ENCODE measurements at regions of chr16 and their contacts with region 1.

Region 1: GRCh38 chr16:4200000-4200780 is 41.7 kb downstream of the SRL start:
- DNase-seq: peak; percentile 69
- H3K4me3 ChIP-seq: no peak overlapping the region
- H3K27ac ChIP-seq: no peak overlapping the region
- H3K4me1 ChIP-seq: no peaks in the 10 kb centered on the region
- H3K27me3 ChIP-seq: no peaks in the 10 kb centered on the region
- CTCF ChIP-seq: peak; percentile 38 to 87 (median 70)
- POLR2A ChIP-seq: no peak

Region 2: GRCh38 chr16:4226251-4227038 is 26.3 kb after region 1 on chr16:
- intact Hi-C with region 1: no loop called
- DNase-seq: no peak
- H3K4me3 ChIP-seq: no peak overlapping the region
- H3K27ac ChIP-seq: no peak overlapping the region
- H3K4me1 ChIP-seq: no peaks in the 10 kb centered on the region
- H3K27me3 ChIP-seq: no peaks in the 10 kb centered on the region
- CTCF ChIP-seq: no peak
- POLR2A ChIP-seq: no peak

Region 3: DNA sequence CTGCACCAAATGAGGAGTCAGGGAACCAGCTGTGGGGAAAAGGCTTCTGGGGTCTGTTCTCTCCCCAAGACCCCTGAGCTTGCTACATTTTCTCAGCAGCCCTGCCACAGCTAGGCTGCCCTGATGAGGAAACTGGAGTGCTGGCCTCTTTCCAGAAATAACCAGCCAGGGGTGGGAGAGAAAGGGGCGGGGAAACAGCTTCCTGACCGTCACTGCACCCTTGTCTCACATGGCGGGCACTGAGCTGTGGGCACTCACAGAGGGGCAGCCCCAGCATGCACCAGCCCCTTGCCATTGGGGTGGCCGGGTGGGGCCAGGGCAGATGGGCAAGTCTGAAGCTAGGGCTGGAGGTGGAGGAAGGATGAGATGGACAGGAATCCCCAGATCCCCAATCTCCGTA is 38.8 kb after region 1 on chr16:
- intact Hi-C with region 1: loop called (anchors 5 kb)
- DNase-seq: no peak
- H3K4me3 ChIP-seq: no peak overlapping the region
- H3K27ac ChIP-seq: no peak overlapping the region
- H3K4me1 ChIP-seq: no peaks in the 10 kb centered on the region
- H3K27me3 ChIP-seq: no peaks in the 10 kb centered on the region
- CTCF ChIP-seq: no peak
- POLR2A ChIP-seq: no peak

Region 4: DNA sequence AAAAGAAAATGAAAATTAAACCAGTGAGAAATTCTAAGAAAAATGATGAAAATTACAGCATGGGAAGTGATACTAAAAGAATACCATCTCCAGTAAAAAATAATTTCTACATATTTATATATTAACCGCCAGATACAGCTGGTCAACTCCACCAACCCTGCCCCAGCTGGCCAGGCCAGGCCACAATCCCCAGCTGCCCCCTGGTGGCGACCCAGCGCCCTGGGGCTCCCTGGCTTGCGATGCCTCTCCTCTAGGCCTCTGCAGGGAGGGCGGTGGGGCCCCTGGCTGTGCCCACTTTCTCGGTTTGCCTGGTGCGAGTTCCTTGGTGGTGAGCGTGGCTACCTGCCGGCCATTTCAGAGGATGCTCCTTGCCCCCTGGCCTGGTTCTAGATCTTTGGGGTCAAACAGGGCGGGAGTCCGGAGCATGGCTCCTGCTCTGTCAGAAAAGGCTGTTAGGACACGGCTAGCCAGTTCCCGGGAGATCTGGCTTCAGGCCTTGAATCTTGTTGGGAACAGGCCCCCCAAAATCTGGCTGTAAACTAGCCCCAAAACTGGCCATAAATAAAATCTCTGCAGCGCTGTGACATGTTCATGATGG is 130.2 kb after region 1 on chr16:
- intact Hi-C with region 1: loop called (anchors 2 kb)
- DNase-seq: peak; percentile 69
- H3K4me3 ChIP-seq: no peak overlapping the region
- H3K27ac ChIP-seq: no peak overlapping the region
- H3K4me1 ChIP-seq: peaks cover 3% of the 10 kb centered on the region
- H3K27me3 ChIP-seq: no peaks in the 10 kb centered on the region
- CTCF ChIP-seq: peak; percentile 82 to 95 (median 93)
- POLR2A ChIP-seq: no peak

Measured in prostate gland (tissue), 2 donors.